Aorta (tissue), 5 donors: ENCODE measurements at regions of chr15 and their contacts with region 1.

Region 1: DNA sequence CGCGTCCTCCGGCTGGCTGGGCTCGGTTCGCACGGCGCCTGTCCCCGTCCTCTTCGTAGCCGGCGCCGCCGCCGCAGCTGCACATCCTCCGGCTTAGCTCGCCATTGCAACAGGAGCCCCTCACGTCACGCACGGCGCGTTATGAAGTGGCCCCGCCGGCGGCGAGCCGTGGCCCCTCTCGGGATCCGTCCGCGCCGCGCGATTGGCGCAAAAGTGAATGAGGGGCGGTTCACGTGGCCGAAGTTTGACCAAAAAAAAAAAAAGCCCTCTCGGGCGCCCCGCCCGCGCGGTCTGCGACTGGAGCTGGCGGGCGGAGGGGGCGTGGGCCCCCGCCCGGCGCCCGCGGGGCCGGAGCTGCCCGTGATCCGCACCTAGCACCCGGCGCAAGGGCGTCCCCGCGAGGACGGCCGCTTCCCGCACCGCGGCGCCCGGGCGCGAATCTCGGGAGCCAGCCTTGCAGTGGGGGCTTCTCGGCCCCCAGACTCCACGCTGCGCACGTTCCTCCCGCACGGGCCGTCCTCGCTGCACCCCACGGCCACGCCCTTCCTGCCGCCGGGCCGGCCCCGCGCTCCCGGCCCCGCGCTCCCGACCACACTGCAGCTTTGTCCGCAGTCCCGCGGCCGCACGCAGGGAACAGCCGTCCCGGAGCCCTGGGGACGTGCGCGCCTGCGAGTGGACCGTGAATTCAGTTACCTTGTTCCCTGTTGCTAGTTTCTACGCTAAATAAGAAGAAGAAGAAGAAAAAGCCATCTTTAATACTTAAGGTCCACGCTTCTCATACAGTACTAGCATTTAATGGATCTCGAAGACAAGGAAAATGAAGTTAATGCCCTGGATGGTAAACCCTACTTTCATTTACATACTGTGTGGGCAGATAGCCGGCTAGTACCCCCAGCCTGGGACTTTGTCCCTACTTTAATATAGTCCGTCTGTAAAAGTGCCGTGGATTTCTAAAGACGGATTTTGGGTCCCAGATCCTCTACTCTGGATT is at the start of gene CHSY1:
- DNase-seq: peak; percentile 96 to 98
- ATAC-seq: peak; percentile 93
- H3K4me3 ChIP-seq: peak within 1 kb of the TSS; percentile 65 to 70
- H3K27ac ChIP-seq: peak within 1 kb of the TSS; percentile 73 to 92
- H3K4me1 ChIP-seq: peaks cover 0 to 2% of the 10 kb centered on the region in 2 donors
- H3K27me3 ChIP-seq: no peaks in the 10 kb centered on the region
- total RNA-seq, gene CHSY1: 65.4 to 78.4 TPM

Region 2: DNA sequence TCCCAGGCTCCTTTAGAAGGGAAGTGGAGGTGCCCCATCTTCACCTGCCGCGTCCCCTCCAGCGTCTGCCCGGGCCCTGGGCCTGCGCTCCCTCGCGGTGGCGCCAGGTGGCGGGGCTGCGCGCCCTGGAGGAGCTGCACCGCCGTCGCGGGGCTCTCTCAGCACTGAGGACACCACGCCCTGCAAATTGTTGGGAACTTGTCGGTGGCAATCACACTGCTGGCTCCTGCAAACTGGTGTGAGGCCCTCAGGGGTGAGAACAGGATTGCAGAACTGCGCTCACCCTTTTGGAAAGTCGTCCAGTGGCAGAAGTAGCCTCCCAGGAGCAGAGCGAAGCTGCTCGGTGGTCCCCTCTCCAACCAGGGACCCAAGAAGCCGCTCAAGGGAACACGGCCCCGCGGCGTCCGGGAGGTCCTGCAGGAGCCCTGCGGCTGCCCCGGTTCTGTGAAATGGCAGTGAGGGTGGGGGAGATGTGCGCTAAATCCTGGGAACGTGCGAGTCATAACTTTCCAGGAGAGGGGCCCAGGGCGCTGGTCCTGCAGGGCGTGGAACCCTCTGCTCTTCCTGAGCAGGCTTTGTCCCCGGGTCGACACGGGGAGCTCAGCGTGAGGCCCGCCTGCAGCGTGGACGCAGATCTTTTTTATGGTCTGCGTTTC is 334.0 kb before region 1 on chr15:
- intact Hi-C with region 1: loop called in 1 of 2 experiments (anchors 10 kb)
- DNase-seq: peak; percentile 88 to 91
- ATAC-seq: peak; percentile 93
- H3K4me3 ChIP-seq: peak overlapping the region; percentile 85 to 89
- H3K27ac ChIP-seq: no peak overlapping the region
- H3K4me1 ChIP-seq: no peaks in the 10 kb centered on the region
- H3K27me3 ChIP-seq: no peaks in the 10 kb centered on the region

Region 3: GRCh38 chr15:101078682-101079323 is 173.3 kb before region 1 on chr15:
- intact Hi-C with region 1: no loop called
- DNase-seq: peak in 1 of 2 donors; percentile 56
- ATAC-seq: no peak
- H3K4me3 ChIP-seq: no peak overlapping the region
- H3K27ac ChIP-seq: no peak overlapping the region
- H3K4me1 ChIP-seq: no peaks in the 10 kb centered on the region
- H3K27me3 ChIP-seq: no peaks in the 10 kb centered on the region

Region 4: DNA sequence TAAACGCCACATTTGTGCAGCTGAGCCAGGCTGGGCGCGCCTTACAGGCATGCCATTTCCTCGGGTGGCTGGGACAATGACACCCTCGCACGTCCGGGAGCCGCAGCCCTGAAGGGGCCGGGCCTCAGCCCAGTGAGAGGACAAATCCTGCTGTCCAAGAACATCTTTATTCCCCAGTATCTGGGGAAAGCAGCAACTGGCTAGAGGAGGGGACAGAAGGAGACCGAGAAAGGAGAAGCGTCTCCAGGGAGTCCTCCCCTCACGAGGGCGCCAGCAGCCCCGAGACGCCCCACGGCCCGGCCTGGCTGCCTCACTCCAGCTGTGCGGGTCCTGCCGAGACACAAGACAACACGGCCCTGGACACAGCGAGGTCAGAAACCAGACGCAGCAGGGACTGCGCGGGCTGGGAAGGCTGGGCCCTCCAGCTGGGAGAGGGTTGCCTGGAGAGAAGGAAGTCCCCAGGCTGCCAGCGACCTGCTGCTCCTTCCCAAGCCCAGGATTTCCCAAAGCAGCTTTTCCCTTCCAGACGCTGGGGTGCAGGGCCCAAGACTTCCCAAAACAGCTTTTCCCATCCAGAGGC is 130.5 kb before region 1 on chr15:
- intact Hi-C with region 1: loop called (anchors 1 to 5 kb)
- DNase-seq: peak; percentile 90 to 91
- ATAC-seq: peak; percentile 89
- H3K4me3 ChIP-seq: peak overlapping the region in 1 of 2 donors; percentile 0
- H3K27ac ChIP-seq: peak overlapping the region in 1 of 2 donors; percentile 50
- H3K4me1 ChIP-seq: no peaks in the 10 kb centered on the region
- H3K27me3 ChIP-seq: no peaks in the 10 kb centered on the region

Region 5: GRCh38 chr15:101167753-101168463 is 84.2 kb before region 1 on chr15:
- intact Hi-C with region 1: loop called (anchors 2 to 5 kb)
- DNase-seq: peak; percentile 93 to 94
- ATAC-seq: peak; percentile 84
- H3K4me3 ChIP-seq: no peak overlapping the region
- H3K27ac ChIP-seq: peak overlapping the region; percentile 47 to 86
- H3K4me1 ChIP-seq: peaks cover 3 to 4% of the 10 kb centered on the region in 2 donors
- H3K27me3 ChIP-seq: no peaks in the 10 kb centered on the region

Region 6: DNA sequence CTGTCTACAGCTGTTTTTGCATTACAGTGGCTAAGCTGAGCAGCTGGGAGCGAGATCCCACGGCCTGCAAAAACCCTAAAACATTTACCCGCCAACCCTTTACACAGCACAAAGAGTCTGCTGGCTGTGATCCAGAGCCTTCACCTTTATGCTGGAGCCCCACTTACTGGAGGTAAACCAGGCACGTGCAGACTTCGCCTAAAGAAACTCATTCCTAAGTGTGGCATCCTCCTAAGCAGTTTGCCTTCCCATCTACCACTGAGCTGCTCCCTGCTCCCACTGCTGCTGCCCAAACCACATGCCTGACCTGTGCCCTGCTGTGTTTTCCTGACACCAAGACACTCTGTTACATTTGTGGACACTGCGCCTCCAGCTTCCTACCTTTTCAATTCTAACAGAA is 53.3 kb before region 1 on chr15:
- intact Hi-C with region 1: loop called in 1 of 2 experiments (anchors 5 kb)
- DNase-seq: no peak
- ATAC-seq: no peak
- H3K4me3 ChIP-seq: no peak overlapping the region
- H3K27ac ChIP-seq: peak overlapping the region in 1 of 2 donors; percentile 39
- H3K4me1 ChIP-seq: peaks cover 0 to 3% of the 10 kb centered on the region in 2 donors
- H3K27me3 ChIP-seq: no peaks in the 10 kb centered on the region